H1 (cell line): ENCODE measurements at regions of chr2 and their contacts with region 1.

Region 1: DNA sequence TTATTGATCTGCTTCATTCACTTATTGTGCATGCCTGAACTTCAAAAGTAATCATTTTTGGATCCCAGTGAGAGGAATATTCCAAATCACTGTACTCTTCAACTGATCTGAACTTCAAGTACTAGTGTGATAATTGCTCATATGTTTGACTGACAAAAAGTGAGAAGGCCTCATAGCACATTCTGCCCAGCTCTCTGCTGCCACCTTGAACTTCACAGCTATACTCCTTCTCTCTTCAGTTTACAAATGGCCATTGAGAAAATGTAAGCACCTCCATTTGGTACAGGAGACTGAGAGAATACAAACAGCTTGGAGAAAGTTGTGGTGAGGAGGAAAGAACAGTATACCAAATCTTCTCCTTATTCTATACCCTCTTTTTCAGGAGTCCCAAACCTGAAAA is 946.0 kb upstream of the CHAC2 start:
- DNase-seq: no peak
- H3K4me3 ChIP-seq: no peak overlapping the region
- H3K27ac ChIP-seq: no peak overlapping the region
- H3K4me1 ChIP-seq: no peaks in the 10 kb centered on the region
- H3K27me3 ChIP-seq: no peaks in the 10 kb centered on the region
- CTCF ChIP-seq: peak in 1 of 3 experiments; percentile 36; a peak in 1 of 4 replicates
- EP300 ChIP-seq: no peak
- POLR2A ChIP-seq: no peak
- RAD21 ChIP-seq: 0 out of 4 replicates have a peak, but pooled peaks of 1 of the 2 experiments have one; percentile 32

Region 2: GRCh38 chr2:52810460-52810859 is 11.2 kb before region 1 on chr2:
- CTCF ChIA-PET with region 1: interaction called, 16 read pairs
- POLR2A ChIA-PET with region 1: no interaction called
- DNase-seq: no peak
- H3K4me3 ChIP-seq: no peak overlapping the region
- H3K27ac ChIP-seq: no peak overlapping the region
- H3K4me1 ChIP-seq: no peaks in the 10 kb centered on the region
- H3K27me3 ChIP-seq: no peaks in the 10 kb centered on the region
- CTCF ChIP-seq: peak in 2 of 3 experiments; percentile 15 to 44; a peak in 2 of 4 replicates
- EP300 ChIP-seq: no peak
- POLR2A ChIP-seq: no peak
- RAD21 ChIP-seq: peak; percentile 64 to 70

Region 3: GRCh38 chr2:52852006-52852405 is 30.4 kb after region 1 on chr2:
- CTCF ChIA-PET with region 1: no interaction called
- POLR2A ChIA-PET with region 1: no interaction called
- DNase-seq: no peak
- H3K4me3 ChIP-seq: no peak overlapping the region
- H3K27ac ChIP-seq: no peak overlapping the region
- H3K4me1 ChIP-seq: no peaks in the 10 kb centered on the region
- H3K27me3 ChIP-seq: no peaks in the 10 kb centered on the region
- CTCF ChIP-seq: no peak
- EP300 ChIP-seq: no peak
- POLR2A ChIP-seq: no peak
- RAD21 ChIP-seq: no peak